ENCODE measurements at regions of chr5 and their contacts with region 1.

Region 1: GRCh38 chr5:159286420-159287035 is 23.4 kb downstream of the UBLCP1 start:
- DNase-seq: peak; percentile 37
- H3K4me3 ChIP-seq: no peak overlapping the region
- CTCF ChIP-seq: peak; percentile 49

Region 2: GRCh38 chr5:159207686-159208513 is 78.6 kb before region 1 on chr5:
- in situ Hi-C with region 1: no loop called
- DNase-seq: peak; percentile 80
- H3K4me3 ChIP-seq: peak overlapping the region; percentile 78
- CTCF ChIP-seq: peak; percentile 5

Region 3: DNA sequence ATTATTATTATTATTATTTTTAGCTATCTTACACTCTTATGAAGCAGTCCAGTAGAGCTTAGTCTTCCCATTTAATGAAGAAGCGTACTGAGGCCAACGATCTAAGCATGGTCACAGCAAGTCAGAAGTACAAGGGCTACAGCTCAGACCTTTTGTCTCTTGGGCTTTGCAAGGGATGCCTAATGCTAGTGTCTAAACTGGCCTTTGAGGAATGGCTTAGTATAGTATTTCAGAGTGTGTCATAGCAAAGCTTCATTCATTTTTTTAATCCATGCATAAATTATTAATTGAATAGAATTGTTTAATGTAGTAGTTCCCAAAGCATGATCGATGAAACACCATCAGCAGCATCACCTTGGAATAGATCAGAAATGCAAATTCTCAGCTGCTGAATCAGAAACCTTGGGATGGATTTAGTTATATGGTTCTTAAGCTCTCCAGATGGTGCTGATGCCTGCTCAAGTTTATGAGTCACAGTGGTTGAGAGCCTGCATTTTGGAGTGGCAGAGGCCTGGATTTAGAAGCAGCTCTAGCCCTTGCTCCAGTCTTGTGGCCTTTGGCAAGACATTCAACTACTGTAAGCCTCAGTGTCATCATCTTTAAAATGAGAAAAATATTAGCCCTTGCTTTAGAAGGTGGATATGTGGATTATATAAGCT is 37.7 kb after region 1 on chr5:
- in situ Hi-C with region 1: no loop called
- DNase-seq: peak; percentile 70
- H3K4me3 ChIP-seq: no peak overlapping the region
- CTCF ChIP-seq: no peak

Region 4: GRCh38 chr5:159987031-159987674 is 700.6 kb after region 1 on chr5:
- in situ Hi-C with region 1: loop called (anchors 25 kb)
- DNase-seq: no peak
- H3K4me3 ChIP-seq: peak overlapping the region; percentile 42
- CTCF ChIP-seq: peak; percentile 80